B cell (primary cell): ENCODE measurements at regions of chr20 and their contacts with region 1.

Region 1: DNA sequence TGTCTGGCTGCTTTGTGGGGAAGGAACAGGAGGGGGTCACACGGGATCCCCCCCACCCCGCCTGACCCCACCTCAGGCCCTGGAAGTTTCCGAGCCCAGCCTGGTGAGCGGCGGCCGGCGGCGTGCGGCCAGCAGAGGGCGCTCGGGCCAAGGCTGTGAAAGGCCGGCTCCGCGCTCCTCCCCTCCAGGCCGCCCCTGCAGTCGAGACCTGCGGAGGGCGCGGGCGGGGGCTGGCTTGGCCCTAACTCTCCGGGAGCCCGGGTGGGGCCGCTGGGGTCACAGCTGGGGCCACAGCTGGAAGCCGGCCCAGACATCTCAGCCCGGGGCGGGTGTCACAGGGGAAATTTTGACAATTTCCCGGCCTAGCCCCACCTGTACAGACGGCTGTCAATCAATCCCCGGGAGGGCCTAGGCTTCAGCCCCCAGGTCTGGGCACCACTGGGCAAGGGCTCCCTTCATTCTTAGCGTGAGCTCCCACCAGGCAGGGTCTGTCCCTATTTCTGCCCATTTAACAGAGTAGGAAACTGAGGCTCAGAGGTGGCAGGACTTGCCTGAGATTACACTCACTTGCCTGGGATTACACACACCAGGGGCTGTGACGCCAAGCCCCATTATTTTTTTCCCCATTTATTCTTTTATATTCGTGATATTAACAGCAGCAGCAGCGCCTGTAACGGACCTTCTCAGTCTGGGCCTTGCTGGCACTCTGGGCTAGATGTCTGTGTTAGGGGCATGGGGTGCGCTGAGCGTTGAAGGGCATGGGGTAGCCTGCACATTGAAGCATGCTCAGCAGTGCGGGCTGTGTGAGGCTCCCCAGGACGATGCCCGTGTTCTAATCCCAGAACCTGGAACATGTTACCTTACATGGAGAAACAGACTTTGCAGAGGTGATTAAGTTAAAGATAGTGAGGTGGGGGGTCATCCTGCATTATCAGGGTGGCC is 23.0 kb downstream of the ZBP1 start:
- DNase-seq: peak; percentile 88
- ATAC-seq: peak; percentile 86
- H3K4me3 ChIP-seq: peak overlapping the region in 4 of 5 experiments; percentile 23 to 48 (median 35)
- H3K4me3 Mint-ChIP-seq: no peak overlapping the region
- H3K27ac ChIP-seq: no peak overlapping the region
- H3K27ac Mint-ChIP-seq: no peak overlapping the region
- H3K4me1 ChIP-seq: peaks cover 10 to 26% of the 10 kb centered on the region in 2 donors
- H3K4me1 Mint-ChIP-seq: peaks cover 18% of the 10 kb centered on the region
- H3K27me3 ChIP-seq: peaks cover 0 to 14% (median 2%) of the 10 kb centered on the region in 4 experiments
- H3K27me3 Mint-ChIP-seq: peaks cover 5% of the 10 kb centered on the region
- CTCF ChIP-seq: peak; percentile 97

Region 2: GRCh38 chr20:56554869-56555268 is 1042.4 kb before region 1 on chr20:
- CTCF ChIA-PET with region 1: interaction called, 17 read pairs
- POLR2A ChIA-PET with region 1: no interaction called
- intact Hi-C with region 1: no loop called
- DNase-seq: no peak
- ATAC-seq: peak; percentile 31
- H3K4me3 ChIP-seq: no peak overlapping the region
- H3K4me3 Mint-ChIP-seq: no peak overlapping the region
- H3K27ac ChIP-seq: no peak overlapping the region
- H3K27ac Mint-ChIP-seq: no peak overlapping the region
- H3K4me1 ChIP-seq: peaks cover 0 to 6% of the 10 kb centered on the region in 2 donors
- H3K4me1 Mint-ChIP-seq: peaks cover 8% of the 10 kb centered on the region
- H3K27me3 ChIP-seq: no peaks in the 10 kb centered on the region
- H3K27me3 Mint-ChIP-seq: no peaks in the 10 kb centered on the region
- CTCF ChIP-seq: no peak

Region 3: GRCh38 chr20:57498425-57499400 is 98.6 kb before region 1 on chr20:
- CTCF ChIA-PET with region 1: interaction called, 38 read pairs
- POLR2A ChIA-PET with region 1: no interaction called
- intact Hi-C with region 1: loop called (anchors 1 kb)
- DNase-seq: peak; percentile 67
- ATAC-seq: peak; percentile 70
- H3K4me3 ChIP-seq: no peak overlapping the region
- H3K4me3 Mint-ChIP-seq: no peak overlapping the region
- H3K27ac ChIP-seq: no peak overlapping the region
- H3K27ac Mint-ChIP-seq: no peak overlapping the region
- H3K4me1 ChIP-seq: peaks cover 30 to 39% of the 10 kb centered on the region in 2 donors
- H3K4me1 Mint-ChIP-seq: peaks cover 44% of the 10 kb centered on the region
- H3K27me3 ChIP-seq: peaks cover 0 to 3% (median 0%) of the 10 kb centered on the region in 4 experiments
- H3K27me3 Mint-ChIP-seq: peaks cover 9% of the 10 kb centered on the region
- CTCF ChIP-seq: peak; percentile 70

Region 4: GRCh38 chr20:57573890-57574289 is 23.4 kb before region 1 on chr20:
- CTCF ChIA-PET with region 1: no interaction called
- POLR2A ChIA-PET with region 1: no interaction called
- intact Hi-C with region 1: no loop called
- DNase-seq: no peak
- ATAC-seq: no peak
- H3K4me3 ChIP-seq: no peak overlapping the region
- H3K4me3 Mint-ChIP-seq: no peak overlapping the region
- H3K27ac ChIP-seq: no peak overlapping the region
- H3K27ac Mint-ChIP-seq: no peak overlapping the region
- H3K4me1 ChIP-seq: no peaks in the 10 kb centered on the region
- H3K4me1 Mint-ChIP-seq: no peaks in the 10 kb centered on the region
- H3K27me3 ChIP-seq: peaks cover 0 to 31% (median 3%) of the 10 kb centered on the region in 4 experiments
- H3K27me3 Mint-ChIP-seq: peaks cover 38% of the 10 kb centered on the region
- CTCF ChIP-seq: no peak

Region 5: DNA sequence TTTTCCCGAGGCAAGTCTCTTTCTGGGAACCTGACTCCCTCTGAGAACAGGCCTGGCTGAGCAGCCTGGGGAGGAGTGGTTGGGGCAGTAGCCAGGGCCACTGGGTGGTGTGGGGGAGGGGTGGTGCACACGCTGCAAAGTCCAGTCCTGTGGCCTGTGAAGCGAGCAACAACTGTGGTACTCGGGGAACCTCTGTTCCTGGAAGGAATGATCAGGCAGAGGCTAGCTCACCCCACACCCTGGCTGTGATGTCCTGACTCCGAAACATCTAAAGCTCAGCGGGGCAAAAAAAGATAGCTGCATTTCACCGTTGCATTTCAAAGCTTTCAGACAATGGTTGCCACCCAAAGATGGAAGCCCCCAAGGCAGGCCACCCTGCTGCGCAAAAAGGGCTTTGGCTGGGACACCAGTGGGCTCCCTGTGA is 10.9 kb before region 1 on chr20:
- CTCF ChIA-PET with region 1: interaction called, 14 read pairs
- POLR2A ChIA-PET with region 1: no interaction called
- intact Hi-C with region 1: no loop called
- DNase-seq: no peak
- ATAC-seq: no peak
- H3K4me3 ChIP-seq: no peak overlapping the region
- H3K4me3 Mint-ChIP-seq: no peak overlapping the region
- H3K27ac ChIP-seq: no peak overlapping the region
- H3K27ac Mint-ChIP-seq: no peak overlapping the region
- H3K4me1 ChIP-seq: no peaks in the 10 kb centered on the region
- H3K4me1 Mint-ChIP-seq: no peaks in the 10 kb centered on the region
- H3K27me3 ChIP-seq: peaks cover 0 to 24% (median 3%) of the 10 kb centered on the region in 4 experiments
- H3K27me3 Mint-ChIP-seq: peaks cover 51% of the 10 kb centered on the region
- CTCF ChIP-seq: no peak

Region 6: GRCh38 chr20:57628047-57628961 is 31.0 kb after region 1 on chr20:
- CTCF ChIA-PET with region 1: interaction called, 131 read pairs
- POLR2A ChIA-PET with region 1: interaction called, 3 read pairs
- intact Hi-C with region 1: no loop called
- DNase-seq: peak; percentile 82
- ATAC-seq: peak; percentile 78
- H3K4me3 ChIP-seq: peak overlapping the region; percentile 18 to 59 (median 39)
- H3K4me3 Mint-ChIP-seq: peak overlapping the region; percentile 84
- H3K27ac ChIP-seq: peak overlapping the region; percentile 78 to 81
- H3K27ac Mint-ChIP-seq: peak overlapping the region; percentile 93
- H3K4me1 ChIP-seq: peaks cover 31 to 38% of the 10 kb centered on the region in 2 donors
- H3K4me1 Mint-ChIP-seq: peaks cover 41% of the 10 kb centered on the region
- H3K27me3 ChIP-seq: peaks cover 0 to 6% (median 2%) of the 10 kb centered on the region in 4 experiments
- H3K27me3 Mint-ChIP-seq: peaks cover 12% of the 10 kb centered on the region
- CTCF ChIP-seq: no peak

Region 7: DNA sequence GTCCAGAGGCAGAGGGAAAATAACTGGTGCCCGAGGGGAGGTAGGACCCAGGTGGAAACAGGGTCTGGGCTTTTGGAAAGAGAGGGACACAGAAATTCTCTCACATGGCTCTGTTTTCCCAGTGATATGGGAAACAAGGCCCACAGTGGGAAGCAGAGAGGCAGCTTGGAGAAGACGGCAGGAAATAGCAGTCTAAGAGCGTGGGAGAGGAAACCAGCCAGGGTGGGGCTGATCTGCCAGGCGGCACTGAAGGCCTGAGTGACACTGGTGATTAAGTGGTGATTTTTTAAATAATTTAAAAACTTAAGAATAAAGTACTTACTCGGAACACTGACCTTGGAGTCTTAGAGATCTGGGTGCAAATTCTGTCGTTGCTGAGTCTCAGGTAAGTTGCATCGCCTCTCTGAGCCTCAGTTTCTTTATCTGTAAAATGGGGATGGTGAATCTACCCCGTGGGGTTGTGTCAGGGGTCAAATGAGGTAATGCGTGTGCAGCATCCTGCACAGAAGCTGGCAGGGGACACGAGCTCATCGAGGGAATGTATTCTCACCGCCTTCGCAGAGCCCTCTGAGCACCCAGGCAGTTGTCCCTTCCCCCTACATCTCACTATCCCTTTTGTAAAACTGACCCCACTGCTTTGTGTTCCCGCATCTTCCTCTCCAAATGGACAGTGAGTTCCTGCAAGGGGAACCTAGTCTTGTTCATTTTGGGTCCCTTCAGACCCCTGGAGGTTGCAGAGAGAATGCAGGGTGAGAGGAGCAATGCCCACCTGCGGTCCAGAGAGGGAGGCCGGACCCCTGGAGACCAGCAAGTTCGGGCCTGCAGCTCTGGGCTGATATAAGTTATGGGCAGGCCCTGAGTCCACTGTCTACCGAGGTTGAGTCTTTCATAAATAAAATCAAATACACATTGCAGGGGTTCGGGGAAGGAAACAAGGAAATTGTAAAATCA is 341.2 kb after region 1 on chr20:
- CTCF ChIA-PET with region 1: no interaction called
- POLR2A ChIA-PET with region 1: no interaction called
- intact Hi-C with region 1: no loop called
- DNase-seq: no peak
- ATAC-seq: no peak
- H3K4me3 ChIP-seq: no peak overlapping the region
- H3K4me3 Mint-ChIP-seq: no peak overlapping the region
- H3K27ac ChIP-seq: no peak overlapping the region
- H3K27ac Mint-ChIP-seq: no peak overlapping the region
- H3K4me1 ChIP-seq: no peaks in the 10 kb centered on the region
- H3K4me1 Mint-ChIP-seq: no peaks in the 10 kb centered on the region
- H3K27me3 ChIP-seq: no peaks in the 10 kb centered on the region
- H3K27me3 Mint-ChIP-seq: peaks cover 29% of the 10 kb centered on the region
- CTCF ChIP-seq: no peak

Region 8: GRCh38 chr20:58087193-58087858 is 490.1 kb after region 1 on chr20:
- CTCF ChIA-PET with region 1: interaction called, 16 read pairs
- POLR2A ChIA-PET with region 1: no interaction called
- intact Hi-C with region 1: no loop called
- DNase-seq: peak; percentile 15
- ATAC-seq: no peak
- H3K4me3 ChIP-seq: no peak overlapping the region
- H3K4me3 Mint-ChIP-seq: no peak overlapping the region
- H3K27ac ChIP-seq: no peak overlapping the region
- H3K27ac Mint-ChIP-seq: no peak overlapping the region
- H3K4me1 ChIP-seq: no peaks in the 10 kb centered on the region
- H3K4me1 Mint-ChIP-seq: no peaks in the 10 kb centered on the region
- H3K27me3 ChIP-seq: no peaks in the 10 kb centered on the region
- H3K27me3 Mint-ChIP-seq: peaks cover 27% of the 10 kb centered on the region
- CTCF ChIP-seq: peak; percentile 53